Uterus (tissue), 4 donors: ENCODE measurements at regions of chrX and their contacts with region 1.

Region 1: DNA sequence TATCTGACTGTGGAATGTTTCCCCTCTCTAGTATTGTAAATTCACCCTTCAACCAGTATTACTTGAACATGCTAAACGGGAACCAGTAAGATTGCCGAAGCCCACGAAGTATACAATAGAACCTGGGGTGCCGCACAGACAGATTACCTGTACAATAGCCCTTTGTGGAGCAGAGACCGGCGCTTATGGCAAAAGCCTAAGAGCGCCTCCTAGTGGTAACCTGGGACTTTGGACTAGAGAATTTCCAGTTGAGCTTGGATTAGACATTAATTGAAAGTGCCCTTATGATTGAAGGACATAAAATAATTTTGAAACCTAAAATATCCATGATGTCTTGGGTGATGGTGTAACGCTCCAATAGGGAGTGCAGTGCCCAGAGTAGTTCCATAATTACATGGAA is 14.1 kb downstream of the ZNF157 start:
- DNase-seq: peak; percentile 46 to 69
- H3K4me3 ChIP-seq: no peak overlapping the region
- H3K27ac ChIP-seq: no peak overlapping the region
- H3K4me1 ChIP-seq: no peaks in the 10 kb centered on the region
- H3K27me3 ChIP-seq: no peaks in the 10 kb centered on the region
- CTCF ChIP-seq: peak; percentile 55 to 79 (median 62)
- POLR2A ChIP-seq: no peak

Region 2: DNA sequence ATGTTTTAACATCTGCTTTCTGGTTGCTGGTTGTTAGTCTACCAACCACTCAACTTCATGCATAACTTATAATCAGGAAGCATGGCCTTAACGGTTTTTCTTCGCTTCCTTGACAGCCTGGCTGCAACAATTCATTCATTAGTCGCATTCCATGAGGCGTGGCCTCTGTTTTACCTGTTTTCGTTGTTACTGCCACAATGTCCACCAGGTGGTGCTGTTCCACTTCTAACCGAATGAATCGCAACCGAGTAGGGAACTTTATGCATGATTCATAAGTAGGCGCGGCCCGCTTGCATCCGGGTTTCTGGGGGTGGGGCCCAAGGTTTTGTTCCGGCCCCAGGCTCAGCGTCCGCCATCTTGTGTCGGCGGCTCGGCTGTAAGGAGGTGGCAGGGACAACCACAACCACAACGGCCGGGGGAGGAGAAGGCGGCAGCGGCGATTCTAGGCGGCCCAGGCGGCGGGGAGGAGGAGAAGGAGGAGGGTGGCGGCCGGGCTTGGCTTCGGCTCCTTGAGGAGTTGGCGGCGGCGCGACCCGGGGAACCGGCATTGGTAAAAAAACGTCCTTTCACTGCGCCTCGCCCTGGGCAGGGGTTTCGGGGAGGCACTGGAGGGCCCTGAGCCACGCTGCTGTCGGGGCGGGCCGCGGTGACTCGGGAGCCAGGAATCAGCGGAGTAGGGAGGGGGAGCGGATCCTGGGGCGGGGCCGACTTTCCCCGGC is 190.9 kb before region 1 on chrX and contains the start of gene UBA1:
- intact Hi-C with region 1: loop called (anchors 10 kb)
- DNase-seq: peak; percentile 98
- H3K4me3 ChIP-seq: peak within 1 kb of the TSS; percentile 90 to 94
- H3K27ac ChIP-seq: peak within 1 kb of the TSS; percentile 98 to 99
- H3K4me1 ChIP-seq: peaks cover 3 to 15% of the 10 kb centered on the region in 2 donors
- H3K27me3 ChIP-seq: no peaks in the 10 kb centered on the region
- CTCF ChIP-seq: peak; percentile 79 to 98 (median 96)
- POLR2A ChIP-seq: peak; percentile 75 to 82
- total RNA-seq, gene UBA1: 72.9 to 187 (median 149) TPM

Region 3: DNA sequence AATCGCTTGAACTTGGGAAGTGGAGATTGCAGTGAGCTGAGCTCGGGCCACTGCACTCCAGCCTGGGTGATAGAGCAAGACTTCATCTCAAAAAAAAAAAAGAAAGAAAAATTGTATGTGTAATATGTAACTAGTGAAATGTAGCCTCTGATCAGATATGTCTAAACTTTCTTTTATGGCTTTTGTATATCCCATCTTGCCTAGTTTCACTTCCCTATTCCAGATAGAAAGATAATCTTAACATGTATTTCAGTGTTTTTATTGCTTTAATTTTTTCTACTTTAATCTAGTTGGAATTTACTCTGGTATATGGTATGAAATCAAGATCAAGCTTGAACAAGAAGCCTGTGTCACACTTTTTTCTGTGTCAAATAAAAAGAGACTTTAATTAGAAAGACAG is 100.4 kb after region 1 on chrX:
- intact Hi-C with region 1: no loop called
- DNase-seq: no peak
- H3K4me3 ChIP-seq: no peak overlapping the region
- H3K27ac ChIP-seq: no peak overlapping the region
- H3K4me1 ChIP-seq: no peaks in the 10 kb centered on the region
- H3K27me3 ChIP-seq: peaks cover 0 to 5% of the 10 kb centered on the region in 2 donors
- CTCF ChIP-seq: no peak
- POLR2A ChIP-seq: no peak